GM10248 (cell line): ENCODE measurements at regions of chr6 and their contacts with region 1.

Region 1: DNA sequence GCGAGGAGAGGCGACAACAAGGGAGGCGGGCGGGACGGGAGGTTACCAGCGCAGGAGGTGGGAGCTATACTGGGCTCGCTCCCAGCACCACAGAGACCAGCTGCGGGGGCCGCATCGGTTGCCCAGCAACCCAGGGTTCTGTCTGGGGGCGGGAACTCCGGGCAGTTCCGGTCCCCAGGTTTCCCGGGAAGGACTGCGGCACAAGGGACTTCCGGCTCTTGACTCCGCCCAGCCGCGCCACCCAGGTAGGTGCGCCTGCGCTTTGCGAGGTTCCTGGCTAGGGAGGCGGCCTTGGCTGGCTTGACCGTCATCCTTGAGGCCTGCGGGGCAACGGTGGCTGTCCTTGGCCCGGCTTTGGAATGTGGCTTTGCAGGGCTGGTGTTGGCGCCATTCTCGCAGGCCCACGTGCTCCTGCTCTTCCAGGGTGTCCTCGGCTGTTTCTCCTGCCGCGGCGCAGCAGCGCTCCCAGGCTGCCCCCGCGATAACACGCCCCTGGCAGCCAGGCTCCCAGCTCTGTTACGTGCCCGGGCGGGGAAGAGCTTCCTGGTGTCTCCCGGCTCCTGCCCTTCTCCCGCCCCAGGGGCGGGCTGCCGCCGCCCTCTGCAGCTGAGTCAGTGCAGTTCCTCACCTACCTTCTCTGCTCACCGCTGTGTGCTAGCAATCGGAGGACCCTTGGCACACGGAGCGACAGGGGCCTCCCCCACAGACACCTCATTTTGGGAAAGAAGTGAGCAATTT is at the start of gene RSPH3:
- DNase-seq: peak; percentile 98
- CTCF ChIP-seq: peak; percentile 13

Region 2: GRCh38 chr6:158793432-158793831 is 206.4 kb before region 1 on chr6:
- CTCF ChIA-PET with region 1: interaction called, 11 read pairs
- POLR2A ChIA-PET with region 1: no interaction called
- DNase-seq: peak; percentile 55
- CTCF ChIP-seq: peak; percentile 67

Region 3: GRCh38 chr6:159229651-159230051 is 229.8 kb after region 1 on chr6:
- CTCF ChIA-PET with region 1: no interaction called
- POLR2A ChIA-PET with region 1: no interaction called
- DNase-seq: no peak
- CTCF ChIP-seq: no peak